Endothelial cell of umbilical vein (primary cell): ENCODE measurements at regions of chr15 and their contacts with region 1.

Region 1: GRCh38 chr15:43285609-43286037 is 18.9 kb upstream of the TGM5 start:
- DNase-seq: peak; percentile 64
- H3K4me3 ChIP-seq: no peak overlapping the region
- H3K27ac ChIP-seq: no peak overlapping the region
- H3K4me1 ChIP-seq: peaks cover 2% of the 10 kb centered on the region
- H3K27me3 ChIP-seq: peaks cover 2 to 6% of the 10 kb centered on the region in 2 experiments
- CTCF ChIP-seq: peak; percentile 66 to 75
- POLR2A ChIP-seq: no peak

Region 2: DNA sequence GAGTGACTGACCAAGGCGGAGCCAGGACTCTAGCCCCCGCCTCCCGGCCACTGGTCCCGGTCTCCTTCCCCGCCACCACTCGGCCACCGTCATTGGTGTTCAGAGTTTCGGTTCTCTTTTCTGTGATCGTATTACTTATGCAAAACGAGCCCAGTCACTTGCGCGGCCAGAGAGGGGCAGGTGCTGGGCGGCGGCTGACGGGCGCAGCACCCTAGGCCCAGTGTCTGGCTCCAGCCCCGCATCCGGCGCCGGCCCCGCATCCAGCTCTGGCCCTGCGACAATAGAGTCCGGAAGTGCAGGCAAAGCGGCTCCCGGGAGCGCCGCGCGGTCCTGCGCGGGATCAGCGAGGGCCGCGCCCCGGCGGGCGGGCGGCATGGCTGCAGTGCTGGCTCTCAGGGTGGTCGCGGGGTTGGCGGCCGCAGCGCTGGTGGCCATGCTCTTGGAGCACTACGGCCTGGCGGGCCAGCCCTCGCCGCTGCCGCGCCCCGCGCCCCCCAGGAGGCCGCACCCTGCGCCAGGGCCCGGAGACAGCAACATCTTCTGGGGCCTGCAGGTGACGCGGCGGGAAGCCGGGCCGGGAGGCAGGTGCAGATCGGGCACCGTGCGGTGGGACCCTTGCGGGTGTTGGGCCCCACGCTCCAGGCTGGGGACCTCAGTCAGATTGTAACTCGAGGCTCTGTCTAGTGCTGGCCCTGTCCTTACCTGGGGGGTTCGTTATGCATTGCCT is 152.0 kb before region 1 on chr15 and contains the start of gene TMEM62:
- CTCF ChIA-PET with region 1: no interaction called
- POLR2A ChIA-PET with region 1: no interaction called
- dilution Hi-C with region 1: no loop called
- intact Hi-C with region 1: no loop called
- DNase-seq: peak; percentile 65
- H3K4me3 ChIP-seq: peak within 1 kb of the TSS; percentile 17 to 73 (median 64)
- H3K27ac ChIP-seq: peak within 1 kb of the TSS; percentile 12
- H3K4me1 ChIP-seq: peaks cover 11% of the 10 kb centered on the region
- H3K27me3 ChIP-seq: no peaks in the 10 kb centered on the region
- CTCF ChIP-seq: no peak
- POLR2A ChIP-seq: no peak
- total RNA-seq, gene TMEM62: 17.6 and 22.2 TPM in 2 replicates

Region 3: GRCh38 chr15:43185157-43186017 is 100.2 kb before region 1 on chr15 and contains the start of gene CCNDBP1:
- CTCF ChIA-PET with region 1: interaction called, 26 read pairs
- POLR2A ChIA-PET with region 1: no interaction called
- dilution Hi-C with region 1: no loop called
- intact Hi-C with region 1: loop called (anchors 1 kb)
- DNase-seq: peak; percentile 70
- H3K4me3 ChIP-seq: peak within 1 kb of the TSS; percentile 32 to 76 (median 57)
- H3K27ac ChIP-seq: peak within 1 kb of the TSS; percentile 9
- H3K4me1 ChIP-seq: peaks cover 19% of the 10 kb centered on the region
- H3K27me3 ChIP-seq: no peaks in the 10 kb centered on the region
- CTCF ChIP-seq: peak in 1 of 2 donors; percentile 35
- POLR2A ChIP-seq: peak; percentile 73
- total RNA-seq, gene CCNDBP1: 39.9 and 41.4 TPM in 2 replicates

Region 4: DNA sequence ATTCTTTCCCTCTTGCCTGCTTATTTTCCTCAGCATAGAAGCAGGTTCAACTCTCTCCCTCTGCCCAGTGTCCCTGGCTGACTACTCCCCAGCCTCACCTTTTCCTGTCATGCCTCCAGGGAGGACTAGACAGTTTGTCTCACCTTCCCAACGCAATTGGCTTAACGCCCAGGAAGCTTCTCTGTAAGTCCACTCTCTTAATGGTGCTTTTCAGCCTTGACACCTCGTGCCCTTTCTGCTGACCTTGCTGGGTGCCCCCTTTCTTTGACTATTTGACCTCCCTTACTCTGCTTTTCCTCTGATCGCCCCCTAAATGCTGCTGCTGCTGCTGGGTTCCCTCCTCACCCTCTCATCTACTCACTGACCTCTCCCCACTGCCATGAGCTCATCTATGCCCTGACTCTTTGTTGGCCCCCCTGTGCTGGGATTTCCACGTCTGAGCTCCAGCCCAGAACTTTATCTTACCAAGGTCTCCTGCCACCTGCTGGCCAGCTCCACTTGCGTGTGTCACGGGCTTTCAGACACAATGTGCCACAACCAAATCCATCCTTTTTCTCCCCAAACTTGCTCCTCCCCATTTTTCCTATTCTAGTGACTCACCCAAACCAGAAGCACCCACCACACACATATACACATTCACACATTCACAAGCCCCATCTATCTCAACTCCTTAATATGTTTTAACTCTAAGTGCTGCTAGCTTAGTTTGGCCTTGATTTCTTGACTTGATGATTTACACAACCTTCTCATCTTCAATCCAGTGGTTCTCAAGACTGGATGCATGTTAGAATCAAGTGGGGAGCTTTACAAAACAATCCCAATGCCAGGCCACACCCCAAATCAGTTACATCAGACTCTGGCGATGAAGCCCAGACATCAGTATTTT is 81.4 kb before region 1 on chr15:
- CTCF ChIA-PET with region 1: interaction called, 48 read pairs
- POLR2A ChIA-PET with region 1: no interaction called
- dilution Hi-C with region 1: no loop called
- intact Hi-C with region 1: loop called (anchors 5 kb)
- DNase-seq: peak; percentile 67
- H3K4me3 ChIP-seq: no peak overlapping the region
- H3K27ac ChIP-seq: no peak overlapping the region
- H3K4me1 ChIP-seq: no peaks in the 10 kb centered on the region
- H3K27me3 ChIP-seq: peaks cover 5 to 16% of the 10 kb centered on the region in 2 experiments
- CTCF ChIP-seq: peak; percentile 81 to 82
- POLR2A ChIP-seq: no peak

Region 5: GRCh38 chr15:43268111-43269105 is 17.2 kb before region 1 on chr15:
- CTCF ChIA-PET with region 1: interaction called, 17 read pairs
- POLR2A ChIA-PET with region 1: no interaction called
- dilution Hi-C with region 1: no loop called
- intact Hi-C with region 1: no loop called
- DNase-seq: no peak
- H3K4me3 ChIP-seq: no peak overlapping the region
- H3K27ac ChIP-seq: no peak overlapping the region
- H3K4me1 ChIP-seq: no peaks in the 10 kb centered on the region
- H3K27me3 ChIP-seq: peaks cover 11 to 26% of the 10 kb centered on the region in 2 experiments
- CTCF ChIP-seq: peak in 1 of 2 donors; percentile 23
- POLR2A ChIP-seq: no peak

Region 6: GRCh38 chr15:43302205-43302817 is 16.7 kb after region 1 on chr15:
- CTCF ChIA-PET with region 1: interaction called, 23 read pairs
- POLR2A ChIA-PET with region 1: no interaction called
- dilution Hi-C with region 1: no loop called
- intact Hi-C with region 1: no loop called
- DNase-seq: no peak
- H3K4me3 ChIP-seq: no peak within 1 kb of the TSS
- H3K27ac ChIP-seq: no peak within 1 kb of the TSS
- H3K4me1 ChIP-seq: no peaks in the 10 kb centered on the region
- H3K27me3 ChIP-seq: peaks cover 9 to 20% of the 10 kb centered on the region in 2 experiments
- CTCF ChIP-seq: no peak
- POLR2A ChIP-seq: no peak

Region 7: DNA sequence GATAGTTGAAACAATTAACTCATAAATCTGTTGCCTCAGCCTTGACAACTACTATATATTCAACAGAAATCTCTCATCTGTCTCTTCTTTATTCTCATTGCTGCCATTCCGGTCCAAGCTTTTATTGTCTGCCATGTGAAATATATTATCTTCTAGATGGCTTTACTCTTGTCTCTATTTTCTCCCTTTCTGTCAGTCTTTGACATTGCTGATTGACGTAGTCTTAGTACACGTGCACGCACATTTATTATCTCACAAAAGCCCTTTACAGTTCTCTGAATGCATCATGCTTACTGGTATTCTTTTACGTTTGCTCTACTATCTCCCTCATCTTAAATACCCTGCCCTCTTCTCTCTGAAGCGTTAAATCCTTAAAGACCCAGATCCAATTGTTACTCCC is 466.3 kb after region 1 on chr15:
- CTCF ChIA-PET with region 1: no interaction called
- POLR2A ChIA-PET with region 1: no interaction called
- dilution Hi-C with region 1: no loop called
- intact Hi-C with region 1: no loop called
- DNase-seq: no peak
- H3K4me3 ChIP-seq: no peak overlapping the region
- H3K27ac ChIP-seq: no peak overlapping the region
- H3K4me1 ChIP-seq: peaks cover 4% of the 10 kb centered on the region
- H3K27me3 ChIP-seq: no peaks in the 10 kb centered on the region
- CTCF ChIP-seq: no peak
- POLR2A ChIP-seq: no peak